ENCODE measurements at regions of chr3 and their contacts with region 1.

Region 1: GRCh38 chr3:182917134-182917533 is 63.2 kb downstream of the DCUN1D1 start:
- DNase-seq: no peak
- H3K4me3 ChIP-seq: no peak overlapping the region
- CTCF ChIP-seq: no peak

Region 2: GRCh38 chr3:182959474-182960350 is 42.6 kb after region 1 on chr3:
- in situ Hi-C with region 1: loop called (anchors 5 kb)
- DNase-seq: no peak
- H3K4me3 ChIP-seq: no peak overlapping the region
- CTCF ChIP-seq: no peak